AG04450 (cell line): ENCODE measurements at regions of chr15 and their contacts with region 1.

Region 1: DNA sequence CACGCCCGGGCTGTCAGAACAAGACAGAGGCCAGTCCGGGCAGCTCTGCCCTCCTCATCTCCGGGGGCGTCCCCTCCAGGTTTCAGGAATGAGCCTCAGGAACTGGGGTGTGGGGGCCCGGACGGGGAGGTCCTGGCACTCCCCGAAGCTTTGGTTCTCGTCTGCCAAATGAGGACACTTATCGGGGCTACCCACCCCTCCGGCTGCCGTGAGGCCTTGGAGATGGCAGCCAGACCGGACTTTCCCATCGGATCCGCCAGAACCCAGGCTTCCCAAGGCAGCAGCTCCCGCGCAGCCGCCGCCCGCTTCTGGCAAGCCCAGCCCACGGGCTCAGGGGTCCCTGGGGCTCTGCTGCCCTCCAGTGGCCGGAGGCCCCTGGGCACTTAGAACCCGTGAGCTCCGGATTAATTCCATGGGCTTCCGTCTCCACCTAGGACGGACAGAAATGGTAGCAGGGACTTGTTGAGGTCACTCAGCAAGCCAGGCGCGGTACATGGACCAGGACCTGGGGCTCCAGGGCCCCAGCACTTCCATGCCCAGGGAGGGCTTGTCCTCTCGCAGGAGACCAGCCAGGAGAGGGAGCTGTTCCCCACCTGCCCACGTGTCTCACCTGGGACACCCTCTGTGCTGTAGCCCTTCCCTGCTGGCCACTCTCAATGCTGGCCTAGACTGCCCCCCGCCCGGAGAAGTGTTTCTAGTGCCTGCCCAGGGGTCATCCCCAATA is 89.4 kb downstream of the LINGO1 start:
- DNase-seq: peak; percentile 64
- H3K4me3 ChIP-seq: peak overlapping the region; percentile 54
- H3K27ac ChIP-seq: peak overlapping the region; percentile 11
- H3K27me3 ChIP-seq: peaks cover 3% of the 10 kb centered on the region
- CTCF ChIP-seq: peak; percentile 99

Region 2: DNA sequence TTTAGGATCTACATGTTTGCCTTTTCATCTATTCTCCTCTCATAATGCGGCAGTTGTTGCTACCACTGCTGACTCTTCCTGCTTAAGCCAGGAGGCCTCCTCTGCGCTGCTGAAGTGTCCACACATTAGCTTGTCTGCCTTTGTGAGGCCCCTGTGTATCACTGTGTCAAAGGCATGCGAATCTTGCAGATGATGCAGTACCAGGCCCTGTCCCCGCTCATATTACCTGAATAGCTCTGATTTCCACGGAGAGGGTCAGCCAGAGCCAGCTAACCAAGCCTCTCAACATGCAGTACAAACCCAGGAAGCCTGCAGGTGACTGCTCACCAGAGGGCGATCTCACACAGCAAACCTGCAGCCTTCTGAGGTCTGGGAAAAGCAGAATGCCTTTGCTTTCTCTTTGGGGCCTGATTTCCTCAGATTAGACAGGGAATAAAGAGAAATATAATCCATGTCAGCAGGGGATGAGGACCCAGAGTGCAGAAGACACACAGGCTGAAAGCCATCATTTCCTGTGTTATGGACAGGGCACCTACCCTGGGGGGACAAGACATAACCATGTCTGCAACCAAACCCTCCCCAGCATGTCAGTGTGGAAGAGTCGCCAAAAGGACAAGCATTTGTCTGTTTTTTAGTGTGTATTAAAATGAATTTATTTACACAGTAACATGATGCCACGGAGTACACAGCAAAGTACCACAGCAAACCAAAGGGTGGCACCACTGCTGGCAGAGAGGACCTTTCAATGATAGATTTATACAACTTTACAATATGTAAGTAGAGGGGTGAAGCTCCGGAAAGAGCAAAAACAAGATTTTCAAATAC is 435.6 kb before region 1 on chr15:
- CTCF ChIA-PET with region 1: interaction called, 69 read pairs
- POLR2A ChIA-PET with region 1: interaction called, 3 read pairs
- DNase-seq: peak; percentile 27
- H3K4me3 ChIP-seq: no peak overlapping the region
- H3K27ac ChIP-seq: no peak overlapping the region
- H3K27me3 ChIP-seq: no peaks in the 10 kb centered on the region
- CTCF ChIP-seq: peak; percentile 79

Region 3: DNA sequence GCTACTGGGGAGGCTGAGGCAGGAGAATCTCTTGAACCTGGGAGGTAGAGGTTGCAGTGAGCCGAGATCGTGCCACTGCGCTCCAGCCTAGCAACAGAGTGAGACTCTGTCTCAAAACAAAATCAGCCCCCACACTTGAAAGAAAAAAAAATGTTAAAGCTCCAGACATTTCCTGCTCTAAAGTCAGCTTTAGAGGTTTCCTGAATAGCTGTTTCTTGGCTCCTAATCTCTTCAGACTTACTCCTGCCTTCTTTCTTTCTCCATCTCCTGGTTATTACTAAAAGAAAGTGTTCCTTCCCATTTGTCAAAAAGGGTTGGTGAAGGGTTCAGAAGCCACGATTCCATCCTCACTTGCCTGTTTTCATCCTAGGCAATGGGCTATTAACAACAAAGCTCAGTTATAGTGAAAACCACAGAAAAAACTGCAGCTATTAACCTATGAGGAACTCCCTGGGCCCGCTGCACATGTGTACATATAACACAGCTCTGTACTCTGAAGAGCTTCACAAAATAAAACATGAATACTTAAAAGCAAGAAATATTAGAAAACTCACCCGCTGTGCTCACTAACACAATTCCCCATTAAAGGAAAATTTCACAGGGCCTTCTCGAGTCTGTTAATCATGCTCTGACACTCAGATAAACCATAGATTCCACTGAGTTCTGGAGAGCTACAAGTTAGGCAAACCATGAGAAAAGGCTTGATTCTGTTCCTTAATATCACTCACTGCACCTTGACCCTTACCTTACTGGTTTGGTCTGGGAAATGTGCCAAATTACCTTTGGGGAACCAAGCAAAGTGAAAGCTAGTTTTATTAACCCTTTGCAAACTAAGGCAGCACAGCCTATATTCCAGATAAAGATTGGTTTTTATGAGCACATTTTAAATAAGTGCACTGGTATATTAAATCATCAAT is 382.5 kb before region 1 on chr15:
- CTCF ChIA-PET with region 1: interaction called, 12 read pairs
- POLR2A ChIA-PET with region 1: no interaction called
- DNase-seq: no peak
- H3K4me3 ChIP-seq: no peak overlapping the region
- H3K27ac ChIP-seq: no peak overlapping the region
- H3K27me3 ChIP-seq: no peaks in the 10 kb centered on the region
- CTCF ChIP-seq: no peak

Region 4: GRCh38 chr15:77419836-77420609 is 123.3 kb before region 1 on chr15 and contains the start of gene PEAK1:
- CTCF ChIA-PET with region 1: interaction called, 14 read pairs
- POLR2A ChIA-PET with region 1: no interaction called
- DNase-seq: peak; percentile 97
- H3K4me3 ChIP-seq: peak within 1 kb of the TSS; percentile 82
- H3K27ac ChIP-seq: peak within 1 kb of the TSS; percentile 85
- H3K27me3 ChIP-seq: no peaks in the 10 kb centered on the region
- CTCF ChIP-seq: no peak
- polyA plus RNA-seq, gene PEAK1: 45.2 and 52.1 TPM in 2 replicates

Region 5: DNA sequence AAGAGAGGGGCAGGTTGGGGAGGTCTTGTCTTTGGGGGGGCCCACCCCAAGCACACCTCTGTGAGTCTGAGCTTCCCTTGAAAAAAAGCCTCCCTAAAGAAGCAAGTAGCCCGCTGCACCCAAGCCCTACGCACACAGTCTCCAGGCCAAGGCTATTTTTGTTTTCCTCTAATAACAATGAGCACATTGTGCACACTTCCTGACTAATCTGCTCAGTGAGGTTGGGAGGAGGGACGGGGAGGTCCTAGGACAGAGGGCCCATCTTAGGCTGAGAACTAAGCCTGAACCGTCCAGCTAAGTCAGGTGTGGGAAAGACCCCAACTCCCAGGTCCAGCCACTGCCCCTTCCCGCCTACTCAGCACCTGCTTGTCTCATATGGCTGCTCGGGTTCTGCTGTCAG is 35.4 kb before region 1 on chr15:
- CTCF ChIA-PET with region 1: interaction called, 10 read pairs
- POLR2A ChIA-PET with region 1: no interaction called
- DNase-seq: no peak
- H3K4me3 ChIP-seq: no peak overlapping the region
- H3K27ac ChIP-seq: peak overlapping the region; percentile 23
- H3K27me3 ChIP-seq: no peaks in the 10 kb centered on the region
- CTCF ChIP-seq: no peak

Region 6: DNA sequence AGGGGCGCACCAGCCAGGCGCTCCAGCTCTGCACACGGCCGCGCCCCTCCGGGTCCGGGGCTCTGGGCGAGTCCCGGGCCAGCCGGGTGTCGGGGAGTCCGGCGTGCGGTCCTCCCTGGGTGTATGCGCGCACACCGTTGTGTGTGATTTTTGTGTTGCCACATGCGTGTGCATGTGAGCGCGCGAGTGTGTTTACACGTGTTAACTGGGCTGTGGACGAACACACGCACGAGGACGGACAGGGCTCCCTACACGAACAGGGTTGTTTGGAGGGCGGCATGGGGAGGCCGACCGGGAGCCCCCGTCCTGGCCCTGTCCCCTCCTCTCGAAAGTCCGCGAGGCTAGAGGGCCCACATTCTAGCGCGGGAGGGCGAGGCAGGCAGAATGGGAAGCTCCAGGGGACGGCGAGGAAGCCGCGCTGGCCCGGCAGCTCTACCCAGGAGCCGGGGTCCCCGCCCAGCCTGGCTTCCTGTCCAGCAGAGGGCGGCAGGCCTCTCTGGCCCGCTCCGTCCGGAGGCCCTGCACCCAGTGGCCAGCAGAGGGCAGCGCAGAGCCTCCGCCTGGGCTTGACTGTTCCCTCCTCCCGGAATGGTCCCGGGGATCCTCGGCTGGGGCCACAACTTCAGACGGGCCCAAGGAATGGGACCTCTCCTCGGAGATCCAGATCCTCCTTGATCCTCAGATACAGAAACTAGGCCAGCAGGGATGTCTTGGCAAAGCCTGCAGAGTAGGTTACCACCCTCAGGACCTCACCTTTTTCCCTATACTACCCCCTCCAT is 90.0 kb after region 1 on chr15:
- CTCF ChIA-PET with region 1: interaction called, 12 read pairs
- POLR2A ChIA-PET with region 1: no interaction called
- DNase-seq: peak; percentile 52
- H3K4me3 ChIP-seq: peak overlapping the region; percentile 54
- H3K27ac ChIP-seq: no peak overlapping the region
- H3K27me3 ChIP-seq: peaks cover 79% of the 10 kb centered on the region
- CTCF ChIP-seq: peak; percentile 100